Mammary epithelial cell (primary cell): ENCODE measurements at regions of chr3 and their contacts with region 1.

Region 1: GRCh38 chr3:45611628-45612081 is 17.1 kb downstream of the LIMD1 start:
- DNase-seq: peak; percentile 86
- H3K4me3 ChIP-seq: no peak overlapping the region
- H3K27ac ChIP-seq: no peak overlapping the region
- H3K4me1 ChIP-seq: peaks cover 41% of the 10 kb centered on the region
- H3K27me3 ChIP-seq: no peaks in the 10 kb centered on the region
- CTCF ChIP-seq: no peak

Region 2: GRCh38 chr3:45528429-45528828 is 83.2 kb before region 1 on chr3:
- CTCF ChIA-PET with region 1: no interaction called
- dilution Hi-C with region 1: no loop called
- in situ Hi-C with region 1: no loop called
- intact Hi-C with region 1: no loop called
- DNase-seq: peak; percentile 42
- H3K4me3 ChIP-seq: no peak overlapping the region
- H3K27ac ChIP-seq: peak overlapping the region; percentile 12
- H3K4me1 ChIP-seq: peaks cover 12% of the 10 kb centered on the region
- H3K27me3 ChIP-seq: no peaks in the 10 kb centered on the region
- CTCF ChIP-seq: no peak

Region 3: GRCh38 chr3:45593708-45594609 is 17.7 kb before region 1 on chr3:
- CTCF ChIA-PET with region 1: no interaction called
- dilution Hi-C with region 1: no loop called
- in situ Hi-C with region 1: no loop called
- intact Hi-C with region 1: loop called (anchors 2 kb)
- DNase-seq: peak; percentile 70
- H3K4me3 ChIP-seq: peak overlapping the region; percentile 45 to 56 (median 54)
- H3K27ac ChIP-seq: peak overlapping the region; percentile 63
- H3K4me1 ChIP-seq: peaks cover 42% of the 10 kb centered on the region
- H3K27me3 ChIP-seq: no peaks in the 10 kb centered on the region
- CTCF ChIP-seq: no peak

Region 4: DNA sequence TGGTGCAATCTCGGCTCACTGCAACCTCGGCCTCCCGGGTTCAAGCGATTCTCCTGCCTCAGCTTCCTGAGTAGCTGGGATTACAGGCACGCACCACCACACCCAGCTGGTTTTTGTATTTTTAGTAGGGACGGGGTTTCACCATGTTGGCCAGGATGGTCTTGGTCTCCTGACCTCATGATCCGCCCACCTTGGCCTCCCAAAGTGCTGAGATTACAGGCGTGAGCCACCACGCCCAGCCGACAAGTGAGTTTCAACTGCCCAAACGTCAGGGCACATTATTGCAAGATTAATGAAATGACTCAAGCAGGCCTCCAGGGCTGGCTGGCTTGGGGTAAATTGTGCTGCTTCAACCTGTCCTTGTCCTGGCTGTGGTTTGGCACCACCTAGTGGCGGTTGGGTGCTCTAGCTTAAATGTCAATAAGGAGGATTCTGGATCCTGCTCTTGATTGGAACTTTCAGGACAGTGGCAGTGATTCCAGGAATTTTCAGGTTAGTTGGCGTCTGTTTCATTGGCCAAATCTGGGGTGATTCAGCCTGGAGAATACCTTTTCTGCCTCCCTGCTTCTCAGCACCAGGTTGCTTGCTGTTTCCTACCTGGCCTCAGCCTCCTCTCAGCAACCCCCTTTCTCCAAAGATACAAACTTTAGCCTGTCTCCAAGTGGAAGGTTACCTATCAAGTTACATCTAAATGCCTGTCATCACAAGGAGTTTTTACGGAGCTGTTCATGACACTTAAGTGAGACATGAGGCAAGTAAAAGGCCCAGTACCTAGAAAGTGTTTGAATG is 45.1 kb after region 1 on chr3:
- CTCF ChIA-PET with region 1: no interaction called
- dilution Hi-C with region 1: no loop called
- in situ Hi-C with region 1: no loop called
- intact Hi-C with region 1: no loop called
- DNase-seq: peak; percentile 91
- H3K4me3 ChIP-seq: no peak overlapping the region
- H3K27ac ChIP-seq: no peak overlapping the region
- H3K4me1 ChIP-seq: peaks cover 9% of the 10 kb centered on the region
- H3K27me3 ChIP-seq: no peaks in the 10 kb centered on the region
- CTCF ChIP-seq: peak; percentile 90 to 97